MCF 10A (cell line): ENCODE measurements at regions of chr4 and their contacts with region 1.

Region 1: GRCh38 chr4:74531963-74532794 is 87.2 kb downstream of the AREG start:
- DNase-seq: peak; percentile 91
- H3K4me3 Mint-ChIP-seq: no peak overlapping the region
- H3K27ac Mint-ChIP-seq: peak overlapping the region; percentile 80
- H3K4me1 Mint-ChIP-seq: peaks cover 20% of the 10 kb centered on the region
- H3K27me3 Mint-ChIP-seq: no peaks in the 10 kb centered on the region
- CTCF ChIP-seq: peak; percentile 77

Region 2: DNA sequence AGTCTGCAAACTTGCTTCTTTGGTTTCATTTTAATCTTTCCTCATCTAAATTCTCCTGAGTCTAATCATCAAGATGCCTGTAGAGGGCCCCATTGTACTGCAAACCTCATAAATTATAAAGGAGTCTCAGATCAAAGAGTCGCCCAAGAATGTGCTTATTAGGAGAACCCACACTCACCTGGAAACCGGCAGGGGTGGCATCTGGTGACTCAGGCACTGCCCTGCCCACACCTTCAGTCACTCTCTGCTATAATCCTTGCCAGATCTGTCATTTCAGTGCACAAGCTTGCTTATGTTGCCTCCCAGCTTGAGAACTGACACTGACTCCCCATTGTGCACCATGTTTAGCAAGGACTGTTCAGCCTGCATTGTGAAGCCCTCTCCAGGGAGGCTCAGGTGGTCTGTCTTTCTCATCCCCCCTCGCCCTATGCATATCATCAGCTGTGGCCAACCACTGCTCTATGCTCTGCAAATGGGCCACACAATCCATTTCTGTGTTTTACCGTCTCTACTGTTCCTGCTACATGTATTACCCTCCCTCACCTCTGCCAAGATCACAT is 211.5 kb before region 1 on chr4:
- CTCF ChIA-PET with region 1: interaction called, 77 read pairs
- POLR2A ChIA-PET with region 1: interaction called, 23 read pairs
- intact Hi-C with region 1: loop called (anchors 1 kb)
- DNase-seq: peak; percentile 90
- H3K4me3 Mint-ChIP-seq: no peak overlapping the region
- H3K27ac Mint-ChIP-seq: no peak overlapping the region
- H3K4me1 Mint-ChIP-seq: peaks cover 36% of the 10 kb centered on the region
- H3K27me3 Mint-ChIP-seq: no peaks in the 10 kb centered on the region
- CTCF ChIP-seq: peak; percentile 67

Region 3: GRCh38 chr4:74344031-74344430 is 188.1 kb before region 1 on chr4:
- CTCF ChIA-PET with region 1: no interaction called
- POLR2A ChIA-PET with region 1: no interaction called
- intact Hi-C with region 1: no loop called
- DNase-seq: no peak
- H3K4me3 Mint-ChIP-seq: no peak overlapping the region
- H3K27ac Mint-ChIP-seq: no peak overlapping the region
- H3K4me1 Mint-ChIP-seq: peaks cover 6% of the 10 kb centered on the region
- H3K27me3 Mint-ChIP-seq: no peaks in the 10 kb centered on the region
- CTCF ChIP-seq: no peak

Region 4: GRCh38 chr4:74410272-74410671 is 121.9 kb before region 1 on chr4:
- CTCF ChIA-PET with region 1: interaction called, 11 read pairs
- POLR2A ChIA-PET with region 1: interaction called, 3 read pairs
- intact Hi-C with region 1: no loop called
- DNase-seq: peak; percentile 70
- H3K4me3 Mint-ChIP-seq: peak overlapping the region; percentile 55
- H3K27ac Mint-ChIP-seq: peak overlapping the region; percentile 97
- H3K4me1 Mint-ChIP-seq: peaks cover 42% of the 10 kb centered on the region
- H3K27me3 Mint-ChIP-seq: no peaks in the 10 kb centered on the region
- CTCF ChIP-seq: no peak

Region 5: DNA sequence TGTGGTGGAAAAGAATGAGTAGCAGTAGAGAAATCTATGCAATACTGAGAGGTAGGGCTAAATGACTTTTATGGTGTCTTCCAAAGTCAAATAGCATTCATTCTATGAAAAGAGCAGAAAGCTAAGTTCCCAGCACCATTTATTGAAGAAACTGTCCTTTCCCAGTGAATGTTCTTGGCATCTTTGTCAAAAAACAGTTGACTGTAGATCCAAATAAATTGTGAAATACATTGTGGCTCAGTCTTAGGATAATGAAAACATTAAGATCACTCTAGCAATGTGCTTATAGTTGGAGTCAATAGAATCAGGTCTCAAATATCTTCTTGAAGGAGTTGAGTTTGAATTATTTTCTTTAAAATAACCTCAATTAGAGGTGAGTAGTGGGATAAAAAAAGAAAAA is 67.9 kb before region 1 on chr4:
- CTCF ChIA-PET with region 1: interaction called, 15 read pairs
- POLR2A ChIA-PET with region 1: interaction called, 5 read pairs
- intact Hi-C with region 1: no loop called
- DNase-seq: no peak
- H3K4me3 Mint-ChIP-seq: no peak overlapping the region
- H3K27ac Mint-ChIP-seq: no peak overlapping the region
- H3K4me1 Mint-ChIP-seq: no peaks in the 10 kb centered on the region
- H3K27me3 Mint-ChIP-seq: no peaks in the 10 kb centered on the region
- CTCF ChIP-seq: no peak

Region 6: GRCh38 chr4:74543231-74543670 is 11.1 kb after region 1 on chr4:
- CTCF ChIA-PET with region 1: interaction called, 11 read pairs
- POLR2A ChIA-PET with region 1: interaction called, 6 read pairs
- intact Hi-C with region 1: no loop called
- DNase-seq: no peak
- H3K4me3 Mint-ChIP-seq: no peak overlapping the region
- H3K27ac Mint-ChIP-seq: no peak overlapping the region
- H3K4me1 Mint-ChIP-seq: peaks cover 12% of the 10 kb centered on the region
- H3K27me3 Mint-ChIP-seq: no peaks in the 10 kb centered on the region
- CTCF ChIP-seq: no peak

Region 7: DNA sequence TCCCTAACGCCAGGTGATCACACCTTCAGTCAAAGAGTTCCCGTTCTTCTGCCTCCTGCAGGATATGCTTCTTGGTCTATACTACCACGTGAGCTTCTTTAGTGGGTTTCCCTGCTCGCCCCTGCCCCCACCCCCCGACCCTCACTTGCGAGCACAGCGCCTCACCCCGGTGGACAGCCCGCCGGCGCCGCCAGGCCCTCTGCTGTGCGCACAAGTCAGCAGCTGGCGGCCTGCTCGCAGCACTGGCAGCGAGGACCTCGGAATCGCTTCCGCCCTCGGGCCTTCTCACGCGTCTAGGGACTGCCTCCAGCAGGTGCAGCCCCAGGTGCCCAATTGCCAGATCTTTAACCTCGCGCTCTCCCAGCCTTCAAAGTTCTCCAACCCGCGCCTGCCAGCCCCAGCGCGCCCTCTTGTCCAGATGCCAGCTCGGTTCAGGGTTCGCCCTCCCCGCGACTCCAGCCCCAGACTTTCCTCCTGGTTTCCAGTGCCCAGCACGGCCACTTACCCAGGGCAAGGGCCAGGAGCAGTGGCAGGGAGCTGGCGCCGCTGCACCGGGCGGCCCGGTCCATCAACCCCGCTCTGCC is 261.7 kb after region 1 on chr4:
- CTCF ChIA-PET with region 1: no interaction called
- POLR2A ChIA-PET with region 1: interaction called, 3 read pairs
- intact Hi-C with region 1: loop called (anchors 5 kb)
- DNase-seq: peak; percentile 59
- H3K4me3 Mint-ChIP-seq: peak overlapping the region; percentile 97
- H3K27ac Mint-ChIP-seq: peak overlapping the region; percentile 92
- H3K4me1 Mint-ChIP-seq: peaks cover 11% of the 10 kb centered on the region
- H3K27me3 Mint-ChIP-seq: peaks cover 18% of the 10 kb centered on the region
- CTCF ChIP-seq: peak; percentile 36

Region 8: DNA sequence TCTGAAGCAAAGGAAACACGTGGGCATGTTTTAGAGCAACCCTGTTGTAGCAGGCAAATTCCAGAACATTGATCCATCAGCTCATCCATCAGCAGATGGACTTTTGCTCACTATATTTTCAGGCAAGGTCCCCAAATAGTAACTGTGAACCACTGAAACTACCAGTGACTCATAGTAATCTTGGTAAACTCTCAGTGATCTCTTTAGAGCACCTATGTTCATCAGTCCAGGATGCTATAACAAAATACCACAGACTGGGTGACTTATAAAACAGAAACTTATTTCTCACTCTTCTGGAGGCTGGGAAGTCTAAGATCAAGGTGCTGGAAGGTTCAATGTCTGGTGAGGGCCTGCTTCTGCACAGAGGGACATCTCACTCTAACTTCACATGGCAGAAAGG is 291.0 kb after region 1 on chr4:
- CTCF ChIA-PET with region 1: no interaction called
- POLR2A ChIA-PET with region 1: no interaction called
- intact Hi-C with region 1: no loop called
- DNase-seq: no peak
- H3K4me3 Mint-ChIP-seq: no peak overlapping the region
- H3K27ac Mint-ChIP-seq: no peak overlapping the region
- H3K4me1 Mint-ChIP-seq: no peaks in the 10 kb centered on the region
- H3K27me3 Mint-ChIP-seq: no peaks in the 10 kb centered on the region
- CTCF ChIP-seq: no peak